Left cardiac atrium (tissue), 4 donors: ENCODE measurements at regions of chr10 and their contacts with region 1.

Region 1: DNA sequence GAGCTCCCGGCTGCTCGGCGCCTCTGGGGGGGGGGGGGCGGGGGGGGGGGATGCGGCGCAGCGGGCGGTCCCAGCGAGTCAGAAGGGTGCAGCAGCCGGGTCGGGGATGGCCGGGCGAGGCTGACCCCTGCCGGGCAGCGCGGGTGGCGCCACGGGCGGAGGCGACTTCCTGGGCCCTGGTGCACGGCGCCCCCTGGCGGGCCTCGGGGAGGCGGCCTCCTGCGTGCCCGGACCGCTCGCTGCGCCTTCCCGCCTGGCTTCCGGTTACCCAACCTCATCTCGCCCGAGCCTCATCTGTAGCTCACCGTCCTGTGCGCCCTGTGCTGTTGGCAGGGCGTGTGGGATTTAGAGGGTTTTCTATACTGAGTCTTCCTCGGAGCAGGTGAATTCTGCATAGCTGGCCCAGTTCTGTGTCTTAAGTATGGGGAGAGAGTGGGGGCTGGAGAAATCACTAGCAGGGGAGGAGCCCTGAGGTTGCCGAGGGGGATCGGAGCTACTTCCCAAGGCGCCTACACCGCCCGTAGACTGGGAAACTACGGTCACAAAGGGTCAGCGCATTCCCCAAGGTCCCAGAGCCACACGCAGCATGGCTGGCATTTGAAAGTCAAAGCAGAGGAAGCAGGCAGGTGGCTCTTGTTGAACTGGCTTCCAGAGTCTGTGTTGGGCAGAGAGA is 28.3 kb upstream of the WDFY4 start:
- DNase-seq: peak; percentile 92
- ATAC-seq: peak; percentile 89 to 92

Region 2: DNA sequence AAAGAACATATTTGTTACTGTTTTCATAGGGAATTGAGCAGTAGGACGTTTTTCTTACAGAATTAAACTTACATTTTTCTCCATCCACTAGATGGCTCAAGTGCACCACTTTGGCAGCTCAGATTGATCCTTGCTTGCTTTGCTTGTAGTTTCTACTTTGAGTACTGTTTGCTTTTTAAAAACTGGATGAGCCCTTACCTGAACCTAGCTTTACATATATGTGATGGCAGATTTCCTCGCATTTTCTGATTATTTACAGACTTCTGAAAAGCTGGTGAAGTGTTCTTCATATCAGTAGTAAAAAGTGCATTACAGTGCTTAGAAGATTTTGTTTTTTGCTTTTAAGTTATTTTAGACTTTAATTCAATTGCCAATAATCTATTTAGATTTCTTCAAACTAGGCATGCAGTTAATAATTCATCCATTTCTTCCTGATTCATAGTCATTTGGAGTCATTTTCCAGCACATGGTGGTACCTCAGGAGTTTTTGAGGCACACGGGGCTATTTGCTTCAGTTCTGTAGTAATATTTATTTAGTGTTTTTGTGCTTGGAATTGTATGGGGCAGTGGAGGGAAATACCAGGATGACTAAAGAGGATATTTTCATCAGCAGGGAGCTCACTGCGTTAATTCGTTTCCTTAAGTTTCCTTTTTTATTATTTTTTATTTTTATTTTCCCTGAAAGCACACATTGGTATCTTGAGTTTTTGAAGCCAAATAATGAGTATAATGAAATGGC is 292.6 kb before region 1 on chr10:
- intact Hi-C with region 1: loop called (anchors 1 to 10 kb)
- DNase-seq: no peak
- ATAC-seq: peak; percentile 59 to 71

Region 3: DNA sequence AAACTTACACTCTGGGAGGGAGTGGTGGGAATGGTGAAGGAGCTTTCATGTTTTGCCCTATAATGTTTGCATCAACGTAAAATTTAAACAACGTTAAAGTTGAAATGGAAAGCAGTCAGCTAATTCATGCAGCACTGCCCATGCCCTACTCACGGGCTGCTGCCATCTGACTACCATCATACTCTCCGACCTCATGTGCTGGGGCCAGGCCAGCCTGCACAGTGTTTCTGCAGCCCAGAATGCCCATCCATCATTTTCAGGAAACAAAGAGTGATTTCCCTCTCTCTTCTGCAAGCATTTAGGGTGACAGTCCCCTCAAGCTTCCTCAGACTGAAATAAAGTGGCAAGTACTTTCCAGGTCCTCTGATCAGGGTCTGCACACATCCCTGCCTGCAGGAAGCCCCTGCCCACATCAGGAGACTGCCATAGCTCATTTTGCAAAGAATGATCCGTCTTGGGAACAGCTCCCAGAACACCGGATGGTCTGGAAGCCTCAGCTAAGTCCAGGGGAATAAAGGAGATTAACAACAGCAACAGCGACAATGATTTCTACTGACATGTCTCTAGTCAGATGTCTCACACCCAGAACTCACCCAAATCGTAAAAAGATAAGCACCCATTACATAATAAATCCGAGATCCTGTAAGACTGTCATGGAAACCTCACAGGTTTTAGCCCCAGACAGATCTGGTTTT is 91.8 kb before region 1 on chr10:
- intact Hi-C with region 1: loop called in 1 of 2 experiments (anchors 5 kb)
- DNase-seq: no peak
- ATAC-seq: no peak

Region 4: GRCh38 chr10:49153971-49154370 is 497.6 kb after region 1 on chr10:
- intact Hi-C with region 1: loop called in 1 of 2 experiments (anchors 10 kb)
- DNase-seq: no peak
- ATAC-seq: no peak

Region 5: GRCh38 chr10:49518982-49519578 is 862.7 kb after region 1 on chr10:
- intact Hi-C with region 1: loop called in 1 of 2 experiments (anchors 5 kb)
- DNase-seq: no peak
- ATAC-seq: peak; percentile 47 to 63